ENCODE measurements at regions of chr12 and their contacts with region 1.

Region 1: DNA sequence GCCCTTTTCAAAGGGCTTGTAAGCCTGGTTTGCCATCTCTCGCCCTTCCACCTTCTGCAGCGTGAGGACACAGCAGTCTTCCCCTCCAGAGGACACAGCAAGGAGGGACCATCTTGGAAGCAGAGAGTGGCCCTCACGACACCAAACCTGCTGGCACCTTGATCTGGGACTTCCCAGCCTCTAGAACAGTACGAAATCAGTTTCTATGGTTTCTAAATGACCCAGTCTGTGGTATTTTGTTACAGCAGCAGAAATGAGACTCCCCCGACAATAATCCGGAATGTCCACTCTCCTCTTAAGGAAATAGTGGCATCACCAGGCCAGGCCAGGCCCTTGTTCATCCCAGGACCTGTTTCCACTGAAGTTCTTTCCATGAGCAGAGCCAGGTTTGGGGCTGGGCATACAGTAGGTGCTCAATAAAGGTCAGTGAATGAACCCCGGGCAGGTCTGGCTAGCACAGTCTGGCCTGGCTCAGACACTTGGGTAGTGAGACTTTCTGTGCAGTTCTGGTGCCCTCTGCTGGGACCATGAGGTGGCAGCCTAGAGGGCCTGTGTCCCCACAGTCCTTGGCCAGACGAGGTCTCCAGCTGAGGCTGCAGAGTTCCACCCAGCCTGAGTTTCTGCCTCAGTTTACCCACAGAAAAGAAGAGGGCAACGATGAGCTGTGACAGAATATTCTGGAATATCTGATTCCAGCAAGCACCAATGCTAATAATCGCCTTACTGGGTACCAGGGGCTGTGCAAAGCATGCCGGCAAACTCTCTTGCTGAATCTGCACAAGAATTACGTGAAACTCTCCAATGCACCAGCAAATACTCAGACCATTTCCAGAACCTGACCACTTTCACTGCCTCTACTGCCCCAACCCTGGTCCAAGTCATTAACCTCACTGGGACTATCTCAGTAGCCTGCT is 14.0 kb downstream of the ABCB9 start:
- DNase-seq: peak; percentile 59 to 96 (median 82)

Region 2: DNA sequence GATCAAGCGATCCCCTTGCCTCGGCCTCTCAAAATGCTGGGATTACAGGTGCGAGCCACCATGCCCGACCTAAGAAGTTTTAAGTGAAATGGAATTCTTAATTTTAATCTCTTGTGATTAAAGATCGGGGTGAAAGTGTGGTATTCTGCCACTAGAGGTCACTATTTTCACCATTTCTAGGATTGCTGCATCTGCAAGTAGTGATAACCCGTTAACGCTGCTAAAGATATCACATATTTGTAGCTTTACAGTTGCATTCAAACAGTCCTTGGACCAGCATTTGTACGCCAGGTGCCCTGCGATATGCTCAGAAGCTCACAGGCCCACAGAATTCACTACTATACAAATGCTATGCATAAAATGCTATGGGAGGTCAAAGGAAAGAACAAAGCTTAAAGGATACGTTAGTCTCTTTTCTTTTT is 158.5 kb before region 1 on chr12:
- intact Hi-C with region 1: loop called (anchors 2 kb)
- DNase-seq: peak in 1 of 10 donors; percentile 10

Region 3: DNA sequence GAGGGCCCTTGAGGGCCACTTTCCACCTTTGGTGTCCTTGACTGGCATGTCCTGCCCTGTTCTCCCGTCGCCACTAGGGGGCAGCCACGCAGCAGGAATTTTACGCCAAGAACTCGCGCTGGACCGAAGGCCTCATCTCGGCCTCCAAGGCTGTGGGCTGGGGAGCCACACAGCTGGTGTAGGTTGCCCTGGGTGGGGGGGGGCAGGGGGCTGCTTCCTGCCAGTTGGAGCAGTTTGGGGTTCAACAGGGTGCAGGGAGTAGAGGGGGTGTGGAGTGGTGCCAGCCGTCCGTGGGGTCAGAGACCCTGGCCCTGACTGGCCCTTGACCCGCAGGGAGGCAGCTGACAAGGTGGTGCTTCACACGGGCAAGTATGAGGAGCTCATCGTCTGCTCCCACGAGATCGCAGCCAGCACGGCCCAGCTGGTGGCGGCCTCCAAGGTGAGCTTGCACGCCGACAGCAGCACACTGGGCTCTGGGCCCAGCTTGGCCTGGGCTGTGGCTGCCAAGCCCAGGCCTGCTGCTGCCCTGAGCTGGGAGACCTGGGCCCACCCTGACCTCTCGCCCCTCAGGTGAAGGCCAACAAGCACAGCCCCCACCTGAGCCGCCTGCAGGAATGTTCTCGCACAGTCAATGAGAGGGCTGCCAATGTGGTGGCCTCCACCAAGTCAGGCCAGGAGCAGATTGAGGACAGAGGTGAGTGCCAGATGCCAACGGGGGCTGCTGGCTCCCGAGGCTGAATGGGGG is 91.7 kb before region 1 on chr12:
- intact Hi-C with region 1: loop called (anchors 5 kb)
- DNase-seq: peak; percentile 80 to 98 (median 91)

Region 4: DNA sequence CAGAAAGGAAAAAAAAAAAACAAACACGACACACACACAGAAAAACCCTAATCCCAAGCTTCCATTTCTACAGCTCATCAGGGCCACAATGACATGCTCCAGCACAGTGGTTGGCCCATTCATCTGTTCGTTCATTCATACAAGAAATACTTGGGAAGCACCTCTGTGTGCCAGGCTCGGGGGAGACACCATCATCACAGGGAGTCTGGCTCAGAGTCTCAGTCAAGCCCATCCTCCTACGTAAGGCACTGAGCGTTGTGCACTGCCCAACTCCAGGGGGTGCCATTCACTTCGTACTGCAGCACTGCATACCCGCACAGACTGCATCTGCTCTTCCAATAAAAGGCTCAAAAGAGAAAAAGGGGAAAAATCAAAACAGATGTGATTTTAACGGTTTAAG is 71.6 kb before region 1 on chr12:
- intact Hi-C with region 1: loop called (anchors 5 kb)
- DNase-seq: peak in 9 of 10 donors; percentile 68 to 96 (median 79)